ENCODE measurements at regions of chr12 and their contacts with region 1.

Region 1: GRCh38 chr12:45215419-45216229 is at the start of gene ANO6:
- DNase-seq: peak; percentile 94 to 96
- ATAC-seq: peak; percentile 96
- H3K4me3 ChIP-seq: peak within 1 kb of the TSS; percentile 81 to 88
- H3K27ac ChIP-seq: peak within 1 kb of the TSS; percentile 65 to 91
- H3K4me1 ChIP-seq: peaks cover 0 to 4% of the 10 kb centered on the region in 2 donors
- H3K27me3 ChIP-seq: no peaks in the 10 kb centered on the region
- total RNA-seq, gene ANO6: 88.3 to 129 TPM

Region 2: GRCh38 chr12:45234139-45234846 is 18.7 kb after region 1 on chr12:
- intact Hi-C with region 1: no loop called
- DNase-seq: no peak
- ATAC-seq: peak; percentile 89
- H3K4me3 ChIP-seq: peak overlapping the region; percentile 3 to 11
- H3K27ac ChIP-seq: peak overlapping the region; percentile 100
- H3K4me1 ChIP-seq: peaks cover 10 to 12% of the 10 kb centered on the region in 2 donors
- H3K27me3 ChIP-seq: no peaks in the 10 kb centered on the region

Region 3: DNA sequence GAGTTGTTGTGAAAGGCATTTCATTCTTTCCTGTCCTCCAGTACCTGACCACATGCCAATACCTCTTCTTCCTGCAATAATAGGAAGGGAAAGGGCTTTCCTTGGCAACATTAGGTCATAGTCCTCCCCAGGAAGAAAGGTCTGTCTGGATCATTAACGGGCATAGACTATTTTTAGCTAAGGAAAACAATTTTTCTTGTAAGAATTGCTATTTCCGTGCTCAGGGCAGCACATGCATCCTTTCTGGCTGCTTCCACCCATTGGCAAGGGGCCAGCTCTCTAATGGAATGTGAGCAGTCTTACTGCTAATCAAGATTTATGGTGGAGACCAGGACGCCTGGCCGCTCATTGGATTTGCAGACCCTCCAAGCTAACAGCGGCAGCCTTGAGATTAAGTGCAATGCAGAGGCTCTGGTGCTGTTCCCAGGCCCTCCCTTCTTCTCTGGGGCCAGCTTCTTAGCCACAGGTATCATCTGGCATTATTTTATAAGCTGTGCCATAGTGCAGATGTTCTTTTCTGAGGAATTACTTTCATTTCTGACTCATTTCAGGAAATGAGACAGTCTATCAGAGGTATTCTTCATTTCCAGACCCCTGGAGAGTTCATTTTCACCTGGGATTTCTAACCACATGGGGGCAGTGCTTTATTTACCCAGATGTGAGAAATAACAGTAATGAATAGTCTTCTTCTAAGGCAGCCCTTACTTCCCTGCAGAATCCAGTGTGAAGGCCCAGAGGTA is 53.2 kb after region 1 on chr12:
- intact Hi-C with region 1: loop called (anchors 5 to 10 kb)
- DNase-seq: peak; percentile 94 to 95
- ATAC-seq: peak; percentile 74
- H3K4me3 ChIP-seq: no peak overlapping the region
- H3K27ac ChIP-seq: peak overlapping the region; percentile 80 to 82
- H3K4me1 ChIP-seq: peaks cover 4 to 24% of the 10 kb centered on the region in 2 donors
- H3K27me3 ChIP-seq: no peaks in the 10 kb centered on the region

Region 4: DNA sequence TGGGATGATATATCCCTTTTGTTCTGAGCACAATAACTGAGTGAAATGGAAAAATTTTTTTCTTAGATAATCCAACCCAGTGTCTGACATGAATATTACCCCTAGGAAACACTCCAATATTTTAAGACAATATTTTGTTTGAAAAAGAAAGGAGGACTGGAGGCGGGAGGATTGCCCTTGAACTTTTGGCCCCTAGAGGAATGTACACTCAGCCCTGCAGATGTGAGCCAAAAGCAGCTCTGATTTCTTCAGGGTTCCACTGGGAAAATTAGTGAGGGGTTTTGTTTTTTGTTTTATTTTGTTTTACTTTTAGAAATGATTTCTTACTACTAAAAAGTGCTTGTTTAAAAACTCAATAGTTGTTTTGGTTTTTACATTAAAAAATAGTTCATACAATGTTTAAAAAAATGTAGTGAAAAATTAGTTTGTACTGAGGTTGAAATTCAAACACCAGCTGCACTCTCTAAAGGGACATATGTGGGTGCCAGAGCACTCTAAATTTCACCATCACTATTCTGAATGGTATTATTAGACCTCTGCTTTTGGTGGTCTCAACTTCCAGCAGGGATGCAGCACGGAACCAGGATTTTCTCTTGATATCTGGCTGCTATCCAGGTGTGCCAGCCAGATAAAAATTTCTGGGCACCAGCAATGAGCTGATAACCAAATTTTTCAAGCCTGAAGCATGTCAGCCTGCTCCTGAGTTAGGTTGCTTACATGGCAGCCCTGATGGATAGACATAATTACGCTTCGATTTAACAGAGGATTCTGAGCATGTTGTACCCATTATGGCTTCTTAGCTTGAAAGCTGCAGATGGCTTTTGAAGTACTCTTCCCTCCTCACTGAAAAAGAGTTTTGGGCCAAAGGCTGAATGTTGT is 142.2 kb after region 1 on chr12:
- intact Hi-C with region 1: loop called in 1 of 2 experiments (anchors 1 kb)
- DNase-seq: peak in 1 of 2 donors; percentile 53
- ATAC-seq: peak; percentile 71
- H3K4me3 ChIP-seq: no peak overlapping the region
- H3K27ac ChIP-seq: peak overlapping the region in 1 of 2 donors; percentile 21
- H3K4me1 ChIP-seq: peaks cover 2 to 12% of the 10 kb centered on the region in 2 donors
- H3K27me3 ChIP-seq: no peaks in the 10 kb centered on the region

Region 5: GRCh38 chr12:45409966-45410365 is 194.3 kb after region 1 on chr12:
- intact Hi-C with region 1: loop called in 1 of 2 experiments (anchors 5 kb)
- DNase-seq: peak in 1 of 2 donors; percentile 64
- ATAC-seq: peak; percentile 57
- H3K4me3 ChIP-seq: no peak overlapping the region
- H3K27ac ChIP-seq: peak overlapping the region; percentile 16 to 38
- H3K4me1 ChIP-seq: peaks cover 2 to 8% of the 10 kb centered on the region in 2 donors
- H3K27me3 ChIP-seq: no peaks in the 10 kb centered on the region

Measured in aorta (tissue), 5 donors.